Psoas muscle (tissue), 8 donors: ENCODE measurements at regions of chr13 and their contacts with region 1.

Region 1: DNA sequence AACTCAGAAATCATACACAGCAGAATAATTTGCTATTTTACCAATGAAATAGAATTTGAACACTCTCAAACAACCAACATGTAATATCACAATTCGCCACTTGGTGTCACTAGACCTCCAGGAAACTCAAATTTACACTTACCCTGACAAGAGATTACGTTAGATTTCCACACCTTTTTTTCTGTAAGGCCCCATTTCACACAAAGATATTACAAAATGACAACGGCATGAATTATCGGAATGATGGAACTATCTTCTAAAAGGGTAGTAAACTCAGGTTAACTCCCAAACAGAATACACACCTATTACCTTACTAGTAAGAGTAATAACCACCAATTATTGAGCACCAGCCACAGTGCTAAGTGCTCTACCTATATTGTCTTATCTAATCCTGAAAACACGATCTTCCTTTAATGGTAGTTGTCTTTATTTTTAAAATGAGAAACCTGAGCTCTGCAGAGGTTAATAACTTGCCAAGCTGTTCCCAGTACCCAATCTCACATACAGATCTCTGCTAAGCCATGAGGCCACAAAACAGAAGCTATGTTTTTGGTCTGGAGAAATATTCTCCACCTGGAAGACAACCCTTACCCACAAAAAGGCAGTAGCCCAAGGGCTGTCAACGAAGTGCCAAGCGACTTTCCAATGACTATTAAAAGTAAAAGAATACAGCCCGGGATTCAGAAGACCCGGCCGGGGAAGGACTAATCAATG is 152.4 kb downstream of the DCLK1 start:
- DNase-seq: no peak
- ATAC-seq: peak; percentile 17 to 82 (median 60)
- H3K4me3 ChIP-seq: no peak overlapping the region
- H3K27ac ChIP-seq: peak overlapping the region; percentile 71
- H3K4me1 ChIP-seq: peaks cover 5% of the 10 kb centered on the region
- H3K27me3 ChIP-seq: no peaks in the 10 kb centered on the region
- CTCF ChIP-seq: peak; percentile 89

Region 2: DNA sequence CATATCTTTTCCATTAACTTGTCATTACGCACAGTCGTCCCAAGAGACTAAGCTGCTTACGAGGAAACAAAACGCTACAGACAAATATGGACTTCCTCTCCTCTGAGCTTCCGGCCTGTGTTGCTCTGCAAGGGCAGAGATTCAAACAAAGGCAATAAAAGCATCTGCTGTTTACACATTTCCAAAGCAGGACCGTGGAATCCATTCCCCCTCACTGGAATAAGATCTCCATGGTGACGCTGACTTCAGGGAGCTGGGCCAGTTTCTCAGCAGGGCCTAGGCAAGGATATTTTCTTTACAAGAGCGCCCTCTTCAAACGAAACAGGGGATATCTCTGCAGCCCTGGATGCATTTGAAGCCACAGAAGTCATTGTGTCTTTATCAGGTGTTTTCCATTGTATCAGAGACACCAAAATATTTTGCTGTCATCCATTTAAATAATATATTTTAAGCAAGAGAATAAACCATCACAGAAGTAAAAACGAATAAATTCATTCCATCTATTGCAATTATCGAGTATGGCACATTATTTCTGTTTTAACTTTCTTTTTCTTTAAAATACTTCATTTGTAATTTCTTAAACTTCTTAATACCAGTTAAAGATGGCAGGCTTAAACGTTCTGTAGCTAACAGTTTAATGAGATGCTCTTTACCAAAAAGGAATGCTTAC is 25.1 kb before region 1 on chr13:
- intact Hi-C with region 1: no loop called
- DNase-seq: peak; percentile 76 to 88
- ATAC-seq: peak; percentile 78 to 90 (median 86)
- H3K4me3 ChIP-seq: peak overlapping the region; percentile 26
- H3K27ac ChIP-seq: no peak overlapping the region
- H3K4me1 ChIP-seq: peaks cover 12% of the 10 kb centered on the region
- H3K27me3 ChIP-seq: no peaks in the 10 kb centered on the region
- CTCF ChIP-seq: peak; percentile 49

Region 3: GRCh38 chr13:36006348-36006747 is 27.6 kb after region 1 on chr13:
- intact Hi-C with region 1: no loop called
- DNase-seq: no peak
- ATAC-seq: no peak
- H3K4me3 ChIP-seq: no peak overlapping the region
- H3K27ac ChIP-seq: no peak overlapping the region
- H3K4me1 ChIP-seq: no peaks in the 10 kb centered on the region
- H3K27me3 ChIP-seq: no peaks in the 10 kb centered on the region
- CTCF ChIP-seq: no peak

Region 4: GRCh38 chr13:36088014-36088413 is 109.3 kb after region 1 on chr13:
- intact Hi-C with region 1: no loop called
- DNase-seq: no peak
- ATAC-seq: no peak
- H3K4me3 ChIP-seq: no peak overlapping the region
- H3K27ac ChIP-seq: no peak overlapping the region
- H3K4me1 ChIP-seq: no peaks in the 10 kb centered on the region
- H3K27me3 ChIP-seq: no peaks in the 10 kb centered on the region
- CTCF ChIP-seq: no peak

Region 5: GRCh38 chr13:36131222-36131930 is 152.6 kb after region 1 on chr13 and contains the start of gene DCLK1:
- intact Hi-C with region 1: loop called in 1 of 2 experiments (anchors 5 kb)
- DNase-seq: peak; percentile 76 to 88
- ATAC-seq: peak; percentile 43 to 79 (median 74)
- H3K4me3 ChIP-seq: peak within 1 kb of the TSS; percentile 60
- H3K27ac ChIP-seq: no peak within 1 kb of the TSS
- H3K4me1 ChIP-seq: no peaks in the 10 kb centered on the region
- H3K27me3 ChIP-seq: peaks cover 0 to 38% (median 5%) of the 10 kb centered on the region in 3 donors
- CTCF ChIP-seq: no peak
- total RNA-seq, gene DCLK1: 2.3 to 15.1 (median 6.4) TPM

Region 6: GRCh38 chr13:36275190-36276002 is 296.6 kb after region 1 on chr13:
- intact Hi-C with region 1: loop called (anchors 2 kb)
- DNase-seq: no peak
- ATAC-seq: peak; percentile 48 to 73 (median 66)
- H3K4me3 ChIP-seq: no peak overlapping the region
- H3K27ac ChIP-seq: no peak overlapping the region
- H3K4me1 ChIP-seq: no peaks in the 10 kb centered on the region
- H3K27me3 ChIP-seq: no peaks in the 10 kb centered on the region
- CTCF ChIP-seq: peak; percentile 58